ENCODE measurements at regions of chr12 and their contacts with region 1.

Region 1: GRCh38 chr12:95731519-95731958 is 59.0 kb downstream of the NTN4 start:
- DNase-seq: no peak
- ATAC-seq: no peak
- H3K4me3 ChIP-seq: no peak overlapping the region
- H3K27ac ChIP-seq: no peak overlapping the region
- H3K4me1 ChIP-seq: peaks cover 16% of the 10 kb centered on the region
- H3K27me3 ChIP-seq: no peaks in the 10 kb centered on the region
- CTCF ChIP-seq: no peak

Region 2: GRCh38 chr12:95191060-95191696 is 540.4 kb before region 1 on chr12:
- CTCF ChIA-PET with region 1: no interaction called
- POLR2A ChIA-PET with region 1: interaction called, 12 read pairs
- intact Hi-C with region 1: no loop called
- DNase-seq: no peak
- ATAC-seq: no peak
- H3K4me3 ChIP-seq: no peak overlapping the region
- H3K27ac ChIP-seq: no peak overlapping the region
- H3K4me1 ChIP-seq: peaks cover 4% of the 10 kb centered on the region
- H3K27me3 ChIP-seq: no peaks in the 10 kb centered on the region
- CTCF ChIP-seq: no peak

Region 3: DNA sequence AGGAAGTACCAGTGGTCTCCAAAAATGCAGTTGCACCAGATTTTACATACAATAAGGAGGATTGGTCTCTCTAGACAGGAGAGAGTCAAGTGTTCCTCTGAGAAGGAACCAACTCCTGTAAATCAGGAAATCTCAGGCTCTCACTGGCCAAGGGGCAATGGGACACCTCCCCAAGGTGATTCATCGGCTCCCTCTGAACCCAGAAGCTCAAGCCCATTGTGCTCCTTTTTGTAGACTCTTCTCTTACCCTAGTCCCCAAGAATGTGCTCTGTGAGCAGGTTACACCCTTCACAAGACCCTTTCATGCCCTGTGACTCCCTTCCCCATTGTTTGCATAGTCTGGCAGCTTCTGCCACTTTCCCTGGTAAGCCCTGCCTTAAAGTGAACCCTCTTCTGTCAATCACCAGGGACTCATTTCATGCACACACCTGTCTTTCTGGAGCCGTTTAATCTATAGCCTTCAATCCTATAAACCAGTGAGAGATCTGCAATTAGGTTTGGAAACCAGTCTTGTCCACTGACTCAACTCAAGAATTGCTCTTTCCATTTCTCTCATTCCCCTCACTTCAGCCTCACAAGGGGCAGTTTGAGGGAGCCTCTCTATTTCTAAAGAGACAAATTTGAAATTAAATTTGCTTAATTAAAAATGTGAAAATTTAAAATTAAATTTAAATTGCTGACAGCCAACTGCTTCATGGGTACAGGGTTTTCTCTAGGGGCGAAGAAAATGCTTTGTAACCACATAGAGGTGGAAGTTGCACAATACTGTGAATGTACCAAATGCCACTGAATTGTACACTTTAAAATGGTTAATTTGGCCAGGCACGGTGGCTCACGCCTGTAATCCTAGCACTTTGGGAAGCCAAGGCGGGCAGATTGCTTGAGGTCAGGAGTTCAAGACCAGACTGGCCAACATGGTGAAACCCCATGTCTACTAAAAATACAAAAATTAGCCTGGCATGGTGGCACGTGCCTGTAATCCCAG is 342.1 kb after region 1 on chr12:
- CTCF ChIA-PET with region 1: no interaction called
- POLR2A ChIA-PET with region 1: interaction called, 12 read pairs
- intact Hi-C with region 1: no loop called
- DNase-seq: peak; percentile 54
- ATAC-seq: peak; percentile 62
- H3K4me3 ChIP-seq: no peak overlapping the region
- H3K27ac ChIP-seq: no peak overlapping the region
- H3K4me1 ChIP-seq: peaks cover 8% of the 10 kb centered on the region
- H3K27me3 ChIP-seq: no peaks in the 10 kb centered on the region
- CTCF ChIP-seq: no peak

Measured in PC-3 (cell line).